Endothelial cell of umbilical vein (primary cell): ENCODE measurements at regions of chr4 and their contacts with region 1.

Region 1: DNA sequence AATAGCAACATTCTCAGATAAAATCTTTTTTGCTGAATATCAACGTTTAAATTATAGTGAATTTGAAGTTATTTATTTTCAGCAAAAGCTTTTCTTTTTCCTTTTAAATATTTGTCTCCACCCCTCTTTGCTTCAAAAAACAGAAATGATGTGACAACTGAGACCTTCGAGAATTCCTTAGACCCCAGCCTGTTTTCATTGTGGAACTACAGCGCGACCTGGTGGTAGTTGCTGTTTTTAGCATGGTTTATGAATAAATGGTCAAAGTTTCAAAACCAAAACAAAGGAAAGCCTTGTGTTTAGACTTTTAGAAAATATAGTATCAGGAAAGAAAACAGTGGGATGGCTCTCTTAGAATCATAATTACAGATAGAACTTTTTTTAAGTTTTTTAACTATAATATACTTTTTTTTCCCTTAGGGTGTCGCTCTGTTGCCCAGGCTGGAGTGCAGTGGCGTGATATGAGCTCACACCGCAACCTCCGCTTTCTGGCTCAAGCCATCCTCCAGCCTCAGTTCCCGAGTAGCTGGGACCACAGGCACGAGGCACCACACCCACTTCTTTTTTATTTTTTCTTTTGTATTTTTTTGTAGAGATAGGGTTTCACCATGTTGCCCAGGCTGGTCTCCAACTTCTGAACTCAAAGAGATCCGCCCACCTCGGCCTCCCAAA is 26.8 kb upstream of the TMEM184C start:
- DNase-seq: peak; percentile 70
- H3K4me3 ChIP-seq: no peak overlapping the region
- H3K27ac ChIP-seq: no peak overlapping the region
- H3K4me1 ChIP-seq: no peaks in the 10 kb centered on the region
- H3K27me3 ChIP-seq: peaks cover 0 to 3% of the 10 kb centered on the region in 2 experiments
- CTCF ChIP-seq: peak; percentile 52 to 53
- POLR2A ChIP-seq: no peak

Region 2: GRCh38 chr4:147019061-147019460 is 571.3 kb before region 1 on chr4:
- CTCF ChIA-PET with region 1: interaction called, 44 read pairs
- POLR2A ChIA-PET with region 1: no interaction called
- dilution Hi-C with region 1: no loop called
- intact Hi-C with region 1: loop called (anchors 1 kb)
- DNase-seq: peak; percentile 62
- H3K4me3 ChIP-seq: no peak overlapping the region
- H3K27ac ChIP-seq: no peak overlapping the region
- H3K4me1 ChIP-seq: no peaks in the 10 kb centered on the region
- H3K27me3 ChIP-seq: peaks cover 7% of the 10 kb centered on the region in 2 experiments
- CTCF ChIP-seq: peak; percentile 52 to 66
- POLR2A ChIP-seq: no peak

Region 3: GRCh38 chr4:147111033-147111367 is 479.4 kb before region 1 on chr4:
- CTCF ChIA-PET with region 1: interaction called, 21 read pairs
- POLR2A ChIA-PET with region 1: interaction called, 3 read pairs
- dilution Hi-C with region 1: no loop called
- intact Hi-C with region 1: loop called (anchors 2 kb)
- DNase-seq: peak; percentile 5
- H3K4me3 ChIP-seq: no peak overlapping the region
- H3K27ac ChIP-seq: no peak overlapping the region
- H3K4me1 ChIP-seq: no peaks in the 10 kb centered on the region
- H3K27me3 ChIP-seq: no peaks in the 10 kb centered on the region
- CTCF ChIP-seq: no peak
- POLR2A ChIP-seq: no peak

Region 4: DNA sequence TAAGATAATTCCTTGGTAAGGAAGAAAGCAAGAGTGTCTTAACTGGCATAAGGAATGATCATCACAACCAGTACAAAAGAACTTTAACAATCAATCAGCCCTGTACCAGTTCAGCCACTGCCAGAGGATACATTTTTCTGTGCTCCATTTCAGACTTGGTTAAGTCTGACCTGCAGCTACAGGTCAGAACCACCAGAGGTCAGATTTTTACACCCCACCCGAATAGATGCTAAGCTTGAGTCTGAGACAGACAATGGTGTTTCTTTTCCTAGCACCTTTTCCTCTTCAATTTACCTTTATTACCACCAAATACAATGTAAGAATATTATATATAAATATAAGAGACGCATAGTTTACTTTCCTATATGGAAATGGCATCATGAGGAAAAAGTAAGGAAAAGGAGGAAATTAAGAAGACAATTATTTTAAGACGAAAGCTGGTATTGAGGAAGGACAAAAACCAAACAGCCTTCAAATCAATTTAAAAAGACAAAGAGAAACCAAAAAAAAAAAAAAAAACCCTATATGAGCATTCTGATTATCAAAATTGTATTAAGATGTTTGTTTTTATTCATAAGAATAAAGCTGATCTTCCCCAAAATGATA is 429.4 kb before region 1 on chr4:
- CTCF ChIA-PET with region 1: interaction called, 125 read pairs
- POLR2A ChIA-PET with region 1: no interaction called
- dilution Hi-C with region 1: no loop called
- intact Hi-C with region 1: loop called (anchors 1 kb)
- DNase-seq: peak; percentile 53
- H3K4me3 ChIP-seq: no peak overlapping the region
- H3K27ac ChIP-seq: no peak overlapping the region
- H3K4me1 ChIP-seq: peaks cover 4% of the 10 kb centered on the region
- H3K27me3 ChIP-seq: peaks cover 0 to 14% of the 10 kb centered on the region in 2 experiments
- CTCF ChIP-seq: peak; percentile 65 to 71
- POLR2A ChIP-seq: no peak

Region 5: DNA sequence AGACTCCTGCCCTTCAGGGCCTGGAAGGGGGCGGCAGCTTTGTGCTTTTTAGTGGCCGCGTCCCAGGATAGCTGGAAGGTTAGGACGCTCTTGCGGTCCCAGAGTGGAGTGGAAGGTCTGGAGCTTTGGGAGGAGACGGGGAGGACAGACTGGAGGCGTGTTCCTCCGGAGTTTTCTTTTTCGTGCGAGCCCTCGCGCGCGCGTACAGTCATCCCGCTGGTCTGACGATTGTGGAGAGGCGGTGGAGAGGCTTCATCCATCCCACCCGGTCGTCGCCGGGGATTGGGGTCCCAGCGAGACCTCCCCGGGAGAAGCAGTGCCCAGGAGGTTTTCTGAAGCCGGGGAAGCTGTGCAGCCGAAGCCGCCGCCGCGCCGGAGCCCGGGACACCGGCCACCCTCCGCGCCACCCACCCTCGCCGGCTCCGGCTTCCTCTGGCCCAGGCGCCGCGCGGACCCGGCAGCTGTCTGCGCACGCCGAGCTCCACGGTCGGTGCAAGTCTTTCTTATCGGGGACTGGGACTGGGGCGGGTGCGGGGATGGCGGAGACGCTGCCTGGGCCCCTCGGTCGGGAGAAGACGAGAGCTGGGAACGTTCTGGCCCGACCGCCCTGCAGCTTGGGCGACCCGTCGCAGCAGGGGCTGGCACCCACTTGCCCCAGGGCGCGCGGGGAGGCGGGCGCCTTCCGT is 109.4 kb before region 1 on chr4 and contains the start of gene EDNRA:
- CTCF ChIA-PET with region 1: no interaction called
- POLR2A ChIA-PET with region 1: no interaction called
- dilution Hi-C with region 1: no loop called
- intact Hi-C with region 1: no loop called
- DNase-seq: no peak
- H3K4me3 ChIP-seq: peak within 1 kb of the TSS in 1 of 3 experiments; percentile 23
- H3K27ac ChIP-seq: no peak within 1 kb of the TSS
- H3K4me1 ChIP-seq: no peaks in the 10 kb centered on the region
- H3K27me3 ChIP-seq: peaks cover 23 to 28% of the 10 kb centered on the region in 2 experiments
- CTCF ChIP-seq: no peak
- POLR2A ChIP-seq: no peak
- total RNA-seq, gene EDNRA: not detected in 2 replicates

Region 6: GRCh38 chr4:147513952-147514351 is 76.4 kb before region 1 on chr4:
- CTCF ChIA-PET with region 1: interaction called, 233 read pairs
- POLR2A ChIA-PET with region 1: no interaction called
- dilution Hi-C with region 1: no loop called
- intact Hi-C with region 1: loop called (anchors 1 kb)
- DNase-seq: no peak
- H3K4me3 ChIP-seq: no peak overlapping the region
- H3K27ac ChIP-seq: no peak overlapping the region
- H3K4me1 ChIP-seq: no peaks in the 10 kb centered on the region
- H3K27me3 ChIP-seq: peaks cover 4 to 10% of the 10 kb centered on the region in 2 experiments
- CTCF ChIP-seq: no peak
- POLR2A ChIP-seq: no peak

Region 7: GRCh38 chr4:147578051-147578476 is 12.3 kb before region 1 on chr4:
- CTCF ChIA-PET with region 1: interaction called, 21 read pairs
- POLR2A ChIA-PET with region 1: no interaction called
- dilution Hi-C with region 1: no loop called
- intact Hi-C with region 1: no loop called
- DNase-seq: peak; percentile 98
- H3K4me3 ChIP-seq: no peak overlapping the region
- H3K27ac ChIP-seq: peak overlapping the region; percentile 74
- H3K4me1 ChIP-seq: peaks cover 17% of the 10 kb centered on the region
- H3K27me3 ChIP-seq: no peaks in the 10 kb centered on the region
- CTCF ChIP-seq: no peak
- POLR2A ChIP-seq: peak; percentile 53

Region 8: GRCh38 chr4:148255344-148255720 is 664.9 kb after region 1 on chr4:
- CTCF ChIA-PET with region 1: no interaction called
- POLR2A ChIA-PET with region 1: no interaction called
- dilution Hi-C with region 1: no loop called
- intact Hi-C with region 1: no loop called
- DNase-seq: peak; percentile 64
- H3K4me3 ChIP-seq: no peak overlapping the region
- H3K27ac ChIP-seq: no peak overlapping the region
- H3K4me1 ChIP-seq: peaks cover 15% of the 10 kb centered on the region
- H3K27me3 ChIP-seq: no peaks in the 10 kb centered on the region
- CTCF ChIP-seq: no peak
- POLR2A ChIP-seq: no peak